ENCODE measurements at regions of chr13 and their contacts with region 1.

Region 1: GRCh38 chr13:51583875-51584730 is at the start of gene WDFY2:
- DNase-seq: peak; percentile 98 to 100 (median 99)
- ATAC-seq: peak; percentile 82
- H3K4me3 ChIP-seq: peak within 1 kb of the TSS; percentile 67
- H3K4me3 Mint-ChIP-seq: peak within 1 kb of the TSS; percentile 97
- H3K27ac ChIP-seq: peak within 1 kb of the TSS; percentile 88 to 90
- H3K27ac Mint-ChIP-seq: peak within 1 kb of the TSS; percentile 96
- H3K4me1 ChIP-seq: peaks cover 15% of the 10 kb centered on the region
- H3K4me1 Mint-ChIP-seq: peaks cover 41% of the 10 kb centered on the region
- H3K27me3 ChIP-seq: no peaks in the 10 kb centered on the region
- H3K27me3 Mint-ChIP-seq: no peaks in the 10 kb centered on the region
- CTCF ChIP-seq: no peak
- total RNA-seq, gene WDFY2: 21.4 to 21.9 TPM

Region 2: GRCh38 chr13:49792550-49793324 is 1791.4 kb before region 1 on chr13 and contains the start of gene KPNA3:
- CTCF ChIA-PET with region 1: no interaction called
- POLR2A ChIA-PET with region 1: no interaction called
- intact Hi-C with region 1: loop called in 1 of 2 experiments (anchors 5 kb)
- DNase-seq: peak; percentile 90 to 98 (median 94)
- ATAC-seq: peak; percentile 89
- H3K4me3 ChIP-seq: peak within 1 kb of the TSS; percentile 84
- H3K4me3 Mint-ChIP-seq: peak within 1 kb of the TSS; percentile 100
- H3K27ac ChIP-seq: peak within 1 kb of the TSS; percentile 83 to 92
- H3K27ac Mint-ChIP-seq: peak within 1 kb of the TSS; percentile 95
- H3K4me1 ChIP-seq: peaks cover 22% of the 10 kb centered on the region
- H3K4me1 Mint-ChIP-seq: peaks cover 41% of the 10 kb centered on the region
- H3K27me3 ChIP-seq: no peaks in the 10 kb centered on the region
- H3K27me3 Mint-ChIP-seq: peaks cover 9% of the 10 kb centered on the region
- CTCF ChIP-seq: no peak
- total RNA-seq, gene KPNA3: 15.7 to 17.3 TPM

Region 3: DNA sequence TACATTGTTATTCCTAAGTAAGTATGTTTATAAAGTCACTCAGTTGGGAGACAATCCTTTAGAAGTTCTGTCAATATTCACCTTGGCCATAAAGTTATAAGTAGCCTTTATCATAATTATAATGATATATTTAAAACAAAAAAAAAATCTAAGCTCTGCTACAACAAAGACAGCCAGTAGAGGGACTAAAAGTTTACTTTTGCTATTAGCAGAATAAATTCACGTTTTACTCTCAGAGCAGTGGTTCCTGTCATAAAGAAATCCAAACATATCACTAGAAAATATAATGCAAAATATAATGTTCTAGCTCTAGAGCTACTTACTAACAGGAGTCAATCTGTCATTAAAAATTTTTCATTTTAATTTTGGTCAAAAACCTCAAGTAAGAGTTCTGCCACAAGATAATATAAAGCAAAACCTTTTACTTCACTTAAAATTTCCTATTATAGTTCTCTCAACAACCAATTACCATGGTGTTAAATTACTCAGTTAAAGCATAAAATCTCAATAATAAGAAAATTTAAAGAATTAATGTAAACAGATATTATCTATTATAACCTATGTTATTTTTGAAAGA is 149.0 kb before region 1 on chr13:
- CTCF ChIA-PET with region 1: no interaction called
- POLR2A ChIA-PET with region 1: interaction called, 4 read pairs
- intact Hi-C with region 1: loop called in 1 of 2 experiments (anchors 5 kb)
- DNase-seq: peak in 3 of 14 experiments; percentile 47 to 58 (median 54)
- ATAC-seq: peak; percentile 56
- H3K4me3 ChIP-seq: no peak overlapping the region
- H3K4me3 Mint-ChIP-seq: no peak overlapping the region
- H3K27ac ChIP-seq: no peak overlapping the region
- H3K27ac Mint-ChIP-seq: no peak overlapping the region
- H3K4me1 ChIP-seq: no peaks in the 10 kb centered on the region
- H3K4me1 Mint-ChIP-seq: peaks cover 45% of the 10 kb centered on the region
- H3K27me3 ChIP-seq: no peaks in the 10 kb centered on the region
- H3K27me3 Mint-ChIP-seq: no peaks in the 10 kb centered on the region
- CTCF ChIP-seq: peak; percentile 67

Region 4: GRCh38 chr13:51625555-51626345 is 41.6 kb after region 1 on chr13:
- CTCF ChIA-PET with region 1: no interaction called
- POLR2A ChIA-PET with region 1: no interaction called
- intact Hi-C with region 1: loop called in 1 of 2 experiments (anchors 5 kb)
- DNase-seq: no peak
- ATAC-seq: no peak
- H3K4me3 ChIP-seq: no peak overlapping the region
- H3K4me3 Mint-ChIP-seq: peak overlapping the region; percentile 42
- H3K27ac ChIP-seq: no peak overlapping the region
- H3K27ac Mint-ChIP-seq: no peak overlapping the region
- H3K4me1 ChIP-seq: peaks cover 6% of the 10 kb centered on the region
- H3K4me1 Mint-ChIP-seq: peaks cover 68% of the 10 kb centered on the region
- H3K27me3 ChIP-seq: no peaks in the 10 kb centered on the region
- H3K27me3 Mint-ChIP-seq: no peaks in the 10 kb centered on the region
- CTCF ChIP-seq: no peak

Region 5: GRCh38 chr13:51764184-51765141 is 180.4 kb after region 1 on chr13:
- CTCF ChIA-PET with region 1: interaction called, 4 read pairs
- POLR2A ChIA-PET with region 1: interaction called, 6 read pairs
- intact Hi-C with region 1: loop called in 1 of 2 experiments (anchors 10 kb)
- DNase-seq: peak; percentile 19 to 86 (median 34)
- ATAC-seq: peak; percentile 85
- H3K4me3 ChIP-seq: peak overlapping the region; percentile 49
- H3K4me3 Mint-ChIP-seq: peak overlapping the region; percentile 68
- H3K27ac ChIP-seq: peak overlapping the region; percentile 67 to 73
- H3K27ac Mint-ChIP-seq: peak overlapping the region; percentile 85
- H3K4me1 ChIP-seq: peaks cover 18% of the 10 kb centered on the region
- H3K4me1 Mint-ChIP-seq: peaks cover 23% of the 10 kb centered on the region
- H3K27me3 ChIP-seq: no peaks in the 10 kb centered on the region
- H3K27me3 Mint-ChIP-seq: no peaks in the 10 kb centered on the region
- CTCF ChIP-seq: no peak

Region 6: DNA sequence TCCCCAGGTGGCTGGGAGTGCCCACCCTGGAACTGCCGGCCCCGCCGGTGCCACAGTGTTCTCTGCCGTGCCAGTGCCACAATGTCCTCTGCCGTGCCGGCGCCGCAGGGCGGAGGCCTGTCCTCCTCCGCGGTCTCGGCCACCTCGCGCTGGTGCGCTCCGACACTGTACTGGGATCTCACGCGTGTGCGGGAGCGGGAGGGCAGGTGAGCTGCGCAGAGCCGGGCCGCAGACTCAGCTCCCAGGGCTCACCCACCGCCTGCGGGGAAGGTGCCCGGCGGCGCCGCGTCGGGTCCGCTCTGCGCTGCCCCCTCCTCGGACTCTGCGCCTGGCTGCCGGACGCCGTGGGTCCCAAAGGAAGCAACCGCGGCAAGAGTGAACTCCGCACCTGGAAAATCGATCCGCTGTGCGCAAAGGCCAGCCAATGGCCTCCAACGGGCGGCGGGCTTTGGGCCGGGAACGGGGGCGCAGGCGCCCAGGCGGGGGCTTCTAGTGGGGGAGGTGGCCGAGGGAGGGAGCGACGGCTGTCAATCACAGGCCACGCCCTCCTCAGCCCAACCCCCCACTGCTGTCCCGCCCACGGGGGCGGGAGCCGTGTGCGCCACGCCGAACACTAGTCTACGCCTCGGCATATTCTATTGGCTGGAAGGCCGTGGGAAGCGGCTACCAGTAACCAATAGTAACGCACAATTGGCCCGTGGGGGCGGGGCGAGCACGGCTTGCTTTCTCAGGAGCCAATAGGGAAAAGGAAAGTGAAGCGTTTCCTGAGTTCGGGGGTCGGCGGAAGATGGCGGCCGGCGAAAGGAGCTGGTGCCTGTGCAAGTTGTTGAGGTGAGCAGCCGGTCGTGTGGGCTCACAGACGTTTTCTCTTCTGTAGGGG is 427.8 kb after region 1 on chr13 and contains the start of gene ALG11:
- CTCF ChIA-PET with region 1: no interaction called
- POLR2A ChIA-PET with region 1: no interaction called
- intact Hi-C with region 1: loop called (anchors 5 to 10 kb)
- DNase-seq: peak; percentile 99 to 100 (median 99)
- ATAC-seq: peak; percentile 98
- H3K4me3 ChIP-seq: peak within 1 kb of the TSS; percentile 93
- H3K4me3 Mint-ChIP-seq: peak within 1 kb of the TSS; percentile 92
- H3K27ac ChIP-seq: peak within 1 kb of the TSS in 1 of 2 donors; percentile 56
- H3K27ac Mint-ChIP-seq: peak within 1 kb of the TSS; percentile 84
- H3K4me1 ChIP-seq: peaks cover 9% of the 10 kb centered on the region
- H3K4me1 Mint-ChIP-seq: peaks cover 24% of the 10 kb centered on the region
- H3K27me3 ChIP-seq: peaks cover 2 to 24% of the 10 kb centered on the region in 2 experiments
- H3K27me3 Mint-ChIP-seq: peaks cover 12% of the 10 kb centered on the region
- CTCF ChIP-seq: no peak
- total RNA-seq, gene ALG11: 25.8 to 29.8 TPM

Measured in CD4-positive, alpha-beta T cell (primary cell).